Pancreas (tissue), 10 donors: ENCODE measurements at regions of chr12 and their contacts with region 1.

Region 1: DNA sequence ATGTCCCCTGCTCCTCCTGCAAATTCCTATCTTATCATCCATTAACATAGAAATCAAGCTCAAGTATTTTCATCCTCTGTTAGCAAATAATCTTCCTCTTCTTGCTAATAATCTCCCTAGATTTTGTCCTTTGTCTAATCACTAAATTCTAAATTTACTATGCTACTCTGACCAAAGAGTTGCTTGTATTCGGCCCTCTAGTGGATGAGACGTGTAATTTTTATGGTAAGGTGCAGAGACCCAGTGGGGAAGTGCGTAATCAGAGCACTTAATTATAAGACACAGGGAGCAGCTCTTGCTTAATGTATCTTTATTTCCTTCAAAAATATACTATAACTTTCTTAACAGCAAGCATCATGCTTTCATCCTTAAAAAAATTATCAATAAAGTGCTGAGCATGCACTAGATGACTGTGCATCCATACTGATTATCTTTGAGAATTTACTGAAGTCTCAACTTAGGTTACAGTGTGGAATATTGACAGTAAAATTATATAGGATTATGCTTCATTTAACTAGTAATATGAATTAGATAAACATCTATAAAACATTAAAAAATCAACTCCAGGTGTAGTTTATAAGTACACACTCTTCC is 212.6 kb downstream of the SLC16A7 start:
- DNase-seq: no peak
- ATAC-seq: peak; percentile 60 to 85 (median 82)
- H3K4me3 ChIP-seq: no peak overlapping the region
- H3K27ac ChIP-seq: no peak overlapping the region
- H3K4me1 ChIP-seq: no peaks in the 10 kb centered on the region
- H3K27me3 ChIP-seq: no peaks in the 10 kb centered on the region
- CTCF ChIP-seq: peak; percentile 45 to 66 (median 58)

Region 2: DNA sequence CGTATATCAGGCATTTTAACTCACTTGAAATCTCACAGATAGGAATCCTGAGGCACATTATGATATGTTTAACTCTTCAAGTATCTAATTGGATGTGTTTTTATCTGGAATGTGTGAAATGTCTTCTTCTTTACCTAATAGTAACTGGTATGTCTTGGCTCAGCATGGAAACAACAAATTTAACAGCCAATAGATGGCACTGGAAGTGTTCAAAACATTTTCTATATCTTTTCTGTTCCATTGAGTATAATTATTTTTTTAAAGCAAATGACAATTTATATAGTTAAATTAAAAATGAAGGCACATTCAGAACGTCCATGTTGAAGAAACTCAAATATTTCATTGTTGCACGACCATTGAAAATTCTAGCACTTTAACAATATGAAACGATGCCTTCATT is 377.1 kb before region 1 on chr12:
- intact Hi-C with region 1: loop called in 1 of 3 experiments (anchors 10 kb)
- DNase-seq: no peak
- ATAC-seq: peak in 3 of 4 donors; percentile 44 to 59 (median 57)
- H3K4me3 ChIP-seq: no peak overlapping the region
- H3K27ac ChIP-seq: no peak overlapping the region
- H3K4me1 ChIP-seq: no peaks in the 10 kb centered on the region
- H3K27me3 ChIP-seq: no peaks in the 10 kb centered on the region
- CTCF ChIP-seq: no peak

Region 3: DNA sequence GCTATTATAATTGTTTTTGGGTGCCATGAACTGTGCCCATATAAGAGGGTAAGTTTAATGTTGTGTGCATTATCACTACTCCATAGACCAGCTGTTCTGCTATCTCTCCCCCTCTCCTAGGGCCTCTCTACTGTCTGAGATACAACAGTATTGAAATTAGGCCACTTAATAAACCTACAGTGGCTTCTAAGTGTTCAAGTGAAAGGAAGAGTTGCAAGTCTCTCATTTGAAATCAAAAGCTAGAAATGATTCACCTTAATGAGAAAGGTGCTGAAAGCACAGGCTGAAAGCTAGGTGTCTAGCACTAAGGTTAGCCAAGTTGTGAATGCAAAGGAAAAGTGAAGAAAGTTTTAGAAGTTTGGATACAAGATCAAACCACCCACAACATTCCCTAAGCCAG is 44.6 kb before region 1 on chr12:
- intact Hi-C with region 1: no loop called
- DNase-seq: no peak
- ATAC-seq: no peak
- H3K4me3 ChIP-seq: no peak overlapping the region
- H3K27ac ChIP-seq: no peak overlapping the region
- H3K4me1 ChIP-seq: no peaks in the 10 kb centered on the region
- H3K27me3 ChIP-seq: no peaks in the 10 kb centered on the region
- CTCF ChIP-seq: no peak

Region 4: DNA sequence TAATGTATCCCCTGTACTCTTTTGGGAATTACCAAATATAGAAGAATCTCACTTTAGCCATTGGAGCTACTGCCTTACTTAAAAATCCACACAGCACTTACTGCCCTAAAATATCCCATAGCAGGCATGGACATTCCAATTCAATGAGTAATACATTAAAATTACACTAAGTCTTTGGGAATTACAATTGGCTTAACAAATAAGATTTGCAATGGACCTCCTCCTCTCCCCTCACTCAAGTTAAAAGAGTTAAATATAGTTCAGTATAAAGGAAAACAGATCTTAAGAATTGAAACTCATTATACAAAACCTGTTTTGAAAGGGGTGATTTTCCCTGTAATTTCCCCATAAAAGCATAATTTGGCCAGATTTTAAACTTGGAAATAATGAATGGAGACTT is 264.5 kb after region 1 on chr12:
- intact Hi-C with region 1: no loop called
- DNase-seq: no peak
- ATAC-seq: no peak
- H3K4me3 ChIP-seq: no peak overlapping the region
- H3K27ac ChIP-seq: no peak overlapping the region
- H3K4me1 ChIP-seq: no peaks in the 10 kb centered on the region
- H3K27me3 ChIP-seq: no peaks in the 10 kb centered on the region
- CTCF ChIP-seq: no peak